ENCODE measurements at regions of chr6 and their contacts with region 1.

Region 1: GRCh38 chr6:99425647-99426453 is 742 bp upstream of the PNISR start:
- DNase-seq: peak; percentile 65

Region 2: GRCh38 chr6:99330159-99330558 is 95.7 kb before region 1 on chr6:
- CTCF ChIA-PET with region 1: interaction called, 9 read pairs
- POLR2A ChIA-PET with region 1: interaction called, 13 read pairs
- DNase-seq: peak; percentile 67

Region 3: GRCh38 chr6:99344289-99344688 is 81.6 kb before region 1 on chr6:
- CTCF ChIA-PET with region 1: no interaction called
- POLR2A ChIA-PET with region 1: interaction called, 16 read pairs
- DNase-seq: no peak

Region 4: GRCh38 chr6:99349171-99350141 is 76.4 kb before region 1 on chr6 and contains the start of gene FAXC:
- CTCF ChIA-PET with region 1: no interaction called
- POLR2A ChIA-PET with region 1: interaction called, 16 read pairs
- DNase-seq: peak; percentile 66